ENCODE measurements at regions of chr14 and their contacts with region 1.

Region 1: GRCh38 chr14:90805662-90806540 is 10.3 kb downstream of the TTC7B start:
- DNase-seq: peak in 1 of 3 donors; percentile 36
- H3K4me3 ChIP-seq: no peak overlapping the region
- H3K27ac ChIP-seq: no peak overlapping the region
- H3K4me1 ChIP-seq: peaks cover 0 to 86% (median 68%) of the 10 kb centered on the region in 4 experiments
- H3K27me3 ChIP-seq: no peaks in the 10 kb centered on the region

Region 2: GRCh38 chr14:90510175-90510558 is 295.7 kb before region 1 on chr14:
- CTCF ChIA-PET with region 1: no interaction called
- POLR2A ChIA-PET with region 1: no interaction called
- DNase-seq: no peak
- H3K4me3 ChIP-seq: no peak overlapping the region
- H3K27ac ChIP-seq: no peak overlapping the region
- H3K4me1 ChIP-seq: peaks cover 0 to 51% (median 20%) of the 10 kb centered on the region in 4 experiments
- H3K27me3 ChIP-seq: peaks cover 0 to 5% (median 0%) of the 10 kb centered on the region in 5 experiments

Region 3: DNA sequence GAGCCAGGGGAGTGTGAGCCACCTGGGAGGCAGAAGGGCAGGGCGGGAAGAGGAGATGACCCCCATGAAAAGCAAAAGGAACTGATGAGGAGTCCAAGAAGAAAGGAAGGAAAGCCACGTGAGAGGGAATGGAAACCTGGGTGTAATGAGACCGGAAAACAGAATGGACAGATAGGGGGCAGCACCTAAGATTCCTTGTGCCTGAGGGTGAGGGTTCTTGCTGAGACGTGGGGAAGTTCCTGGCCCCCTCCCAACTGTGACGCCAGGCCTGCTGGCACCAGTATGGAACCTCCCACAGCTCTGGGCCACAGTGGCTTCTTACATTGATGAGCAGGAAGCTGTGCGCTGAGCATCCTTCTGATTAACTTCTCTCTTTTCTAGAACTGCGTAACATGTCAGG is 20.4 kb before region 1 on chr14:
- CTCF ChIA-PET with region 1: interaction called, 11 read pairs
- POLR2A ChIA-PET with region 1: no interaction called
- DNase-seq: peak; percentile 78 to 91 (median 80)
- H3K4me3 ChIP-seq: no peak overlapping the region
- H3K27ac ChIP-seq: no peak overlapping the region
- H3K4me1 ChIP-seq: peaks cover 0 to 3% (median 0%) of the 10 kb centered on the region in 4 experiments
- H3K27me3 ChIP-seq: no peaks in the 10 kb centered on the region

Region 4: GRCh38 chr14:90815822-90816700 is 10.2 kb after region 1 on chr14 and contains the start of gene TTC7B:
- CTCF ChIA-PET with region 1: interaction called, 15 read pairs
- POLR2A ChIA-PET with region 1: no interaction called
- DNase-seq: peak in 1 of 3 donors; percentile 47
- H3K4me3 ChIP-seq: peak within 1 kb of the TSS; percentile 53 to 87 (median 75)
- H3K27ac ChIP-seq: peak within 1 kb of the TSS in 1 of 2 experiments; percentile 67
- H3K4me1 ChIP-seq: peaks cover 0 to 45% (median 33%) of the 10 kb centered on the region in 4 experiments
- H3K27me3 ChIP-seq: no peaks in the 10 kb centered on the region